ENCODE measurements at regions of chr2 and their contacts with region 1.

Region 1: GRCh38 chr2:105037572-105038382 is at the start of gene MRPS9:
- DNase-seq: peak; percentile 98
- ATAC-seq: peak; percentile 99
- H3K4me3 ChIP-seq: peak within 1 kb of the TSS; percentile 76 to 96 (median 84)
- H3K4me3 Mint-ChIP-seq: peak within 1 kb of the TSS; percentile 100
- H3K27ac ChIP-seq: peak within 1 kb of the TSS; percentile 65 to 80
- H3K27ac Mint-ChIP-seq: peak within 1 kb of the TSS; percentile 99
- H3K4me1 ChIP-seq: peaks cover 12 to 16% of the 10 kb centered on the region in 2 donors
- H3K4me1 Mint-ChIP-seq: peaks cover 35% of the 10 kb centered on the region
- H3K27me3 ChIP-seq: no peaks in the 10 kb centered on the region
- H3K27me3 Mint-ChIP-seq: no peaks in the 10 kb centered on the region
- CTCF ChIP-seq: no peak
- total RNA-seq, gene MRPS9: 18.3 and 19.8 TPM in 2 replicates

Region 2: DNA sequence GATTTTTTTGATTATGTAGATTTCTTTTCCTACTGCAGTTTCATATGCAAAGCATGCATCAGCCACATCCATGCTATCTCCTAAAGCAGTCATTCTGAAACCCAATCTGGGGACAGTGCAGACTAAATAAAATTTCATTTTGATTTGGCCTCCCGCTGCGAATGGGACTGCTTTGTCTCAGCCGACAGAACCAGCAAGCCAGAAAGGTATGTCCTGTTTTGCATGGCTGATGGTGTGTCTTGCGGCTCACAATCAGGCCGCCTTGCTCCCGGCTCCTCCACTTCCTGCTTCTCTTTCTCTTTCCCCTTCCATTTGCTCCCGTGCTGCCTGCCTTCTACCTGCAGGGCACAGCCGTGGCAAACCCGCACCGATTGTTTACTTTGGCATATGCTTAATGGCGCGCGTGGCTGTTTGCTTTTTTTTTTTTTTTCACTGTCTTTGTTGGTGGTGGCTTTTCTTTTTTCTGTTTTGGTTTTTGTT is 603.4 kb before region 1 on chr2:
- CTCF ChIA-PET with region 1: no interaction called
- POLR2A ChIA-PET with region 1: no interaction called
- intact Hi-C with region 1: no loop called
- DNase-seq: no peak
- ATAC-seq: no peak
- H3K4me3 ChIP-seq: peak overlapping the region in 2 of 5 experiments; percentile 1 to 13
- H3K4me3 Mint-ChIP-seq: peak overlapping the region; percentile 84
- H3K27ac ChIP-seq: no peak overlapping the region
- H3K27ac Mint-ChIP-seq: no peak overlapping the region
- H3K4me1 ChIP-seq: peaks cover 0 to 4% of the 10 kb centered on the region in 2 donors
- H3K4me1 Mint-ChIP-seq: peaks cover 14% of the 10 kb centered on the region
- H3K27me3 ChIP-seq: peaks cover 0 to 7% (median 4%) of the 10 kb centered on the region in 4 experiments
- H3K27me3 Mint-ChIP-seq: peaks cover 40% of the 10 kb centered on the region
- CTCF ChIP-seq: no peak

Region 3: DNA sequence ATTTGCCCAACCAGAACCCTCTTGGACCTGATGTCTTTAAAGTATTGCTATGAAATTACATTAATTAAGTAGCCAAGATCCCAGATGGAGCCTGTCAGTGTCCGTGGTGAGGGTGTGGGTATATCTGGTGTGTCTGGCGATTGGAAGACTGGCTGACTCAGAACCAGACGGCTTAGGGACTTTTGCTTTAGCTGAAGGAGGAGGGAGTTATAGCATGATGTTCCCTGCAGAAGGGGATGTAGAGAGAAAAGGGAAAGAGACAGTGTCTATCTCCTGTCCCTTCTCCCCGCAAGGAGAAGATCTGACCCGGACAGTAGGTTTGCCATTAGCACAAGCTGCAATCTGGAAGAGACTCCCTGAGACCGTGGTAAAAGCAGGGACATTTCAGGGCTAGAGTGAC is 123.3 kb before region 1 on chr2:
- CTCF ChIA-PET with region 1: no interaction called
- POLR2A ChIA-PET with region 1: no interaction called
- intact Hi-C with region 1: no loop called
- DNase-seq: no peak
- ATAC-seq: no peak
- H3K4me3 ChIP-seq: no peak overlapping the region
- H3K4me3 Mint-ChIP-seq: no peak overlapping the region
- H3K27ac ChIP-seq: no peak overlapping the region
- H3K27ac Mint-ChIP-seq: no peak overlapping the region
- H3K4me1 ChIP-seq: peaks cover 3 to 5% of the 10 kb centered on the region in 2 donors
- H3K4me1 Mint-ChIP-seq: peaks cover 12% of the 10 kb centered on the region
- H3K27me3 ChIP-seq: no peaks in the 10 kb centered on the region
- H3K27me3 Mint-ChIP-seq: peaks cover 4% of the 10 kb centered on the region
- CTCF ChIP-seq: no peak

Region 4: GRCh38 chr2:105143467-105144151 is 105.8 kb after region 1 on chr2:
- CTCF ChIA-PET with region 1: no interaction called
- POLR2A ChIA-PET with region 1: no interaction called
- intact Hi-C with region 1: loop called (anchors 5 kb)
- DNase-seq: peak; percentile 70
- ATAC-seq: peak; percentile 91
- H3K4me3 ChIP-seq: peak overlapping the region in 4 of 5 experiments; percentile 48 to 78 (median 68)
- H3K4me3 Mint-ChIP-seq: peak overlapping the region; percentile 94
- H3K27ac ChIP-seq: peak overlapping the region; percentile 15 to 27
- H3K27ac Mint-ChIP-seq: peak overlapping the region; percentile 89
- H3K4me1 ChIP-seq: peaks cover 17 to 24% of the 10 kb centered on the region in 2 donors
- H3K4me1 Mint-ChIP-seq: peaks cover 30% of the 10 kb centered on the region
- H3K27me3 ChIP-seq: peaks cover 0 to 7% (median 0%) of the 10 kb centered on the region in 4 experiments
- H3K27me3 Mint-ChIP-seq: no peaks in the 10 kb centered on the region
- CTCF ChIP-seq: no peak

Region 5: GRCh38 chr2:105235388-105236054 is 197.7 kb after region 1 on chr2:
- CTCF ChIA-PET with region 1: interaction called, 3 read pairs
- POLR2A ChIA-PET with region 1: no interaction called
- intact Hi-C with region 1: loop called (anchors 1 kb)
- DNase-seq: peak; percentile 81
- ATAC-seq: peak; percentile 68
- H3K4me3 ChIP-seq: no peak overlapping the region
- H3K4me3 Mint-ChIP-seq: no peak overlapping the region
- H3K27ac ChIP-seq: no peak overlapping the region
- H3K27ac Mint-ChIP-seq: no peak overlapping the region
- H3K4me1 ChIP-seq: peaks cover 10 to 12% of the 10 kb centered on the region in 2 donors
- H3K4me1 Mint-ChIP-seq: peaks cover 24% of the 10 kb centered on the region
- H3K27me3 ChIP-seq: no peaks in the 10 kb centered on the region
- H3K27me3 Mint-ChIP-seq: no peaks in the 10 kb centered on the region
- CTCF ChIP-seq: peak; percentile 93

Region 6: GRCh38 chr2:105337124-105338019 is 299.6 kb after region 1 on chr2 and contains the start of gene C2orf49:
- CTCF ChIA-PET with region 1: no interaction called
- POLR2A ChIA-PET with region 1: no interaction called
- intact Hi-C with region 1: loop called (anchors 2 kb)
- DNase-seq: peak; percentile 95
- ATAC-seq: peak; percentile 93
- H3K4me3 ChIP-seq: peak within 1 kb of the TSS; percentile 84 to 95 (median 86)
- H3K4me3 Mint-ChIP-seq: peak within 1 kb of the TSS; percentile 100
- H3K27ac ChIP-seq: peak within 1 kb of the TSS; percentile 92 to 98
- H3K27ac Mint-ChIP-seq: peak within 1 kb of the TSS; percentile 99
- H3K4me1 ChIP-seq: peaks cover 17 to 21% of the 10 kb centered on the region in 2 donors
- H3K4me1 Mint-ChIP-seq: peaks cover 27% of the 10 kb centered on the region
- H3K27me3 ChIP-seq: no peaks in the 10 kb centered on the region
- H3K27me3 Mint-ChIP-seq: no peaks in the 10 kb centered on the region
- CTCF ChIP-seq: no peak
- total RNA-seq, gene C2orf49: 29.3 and 32.1 TPM in 2 replicates

Region 7: DNA sequence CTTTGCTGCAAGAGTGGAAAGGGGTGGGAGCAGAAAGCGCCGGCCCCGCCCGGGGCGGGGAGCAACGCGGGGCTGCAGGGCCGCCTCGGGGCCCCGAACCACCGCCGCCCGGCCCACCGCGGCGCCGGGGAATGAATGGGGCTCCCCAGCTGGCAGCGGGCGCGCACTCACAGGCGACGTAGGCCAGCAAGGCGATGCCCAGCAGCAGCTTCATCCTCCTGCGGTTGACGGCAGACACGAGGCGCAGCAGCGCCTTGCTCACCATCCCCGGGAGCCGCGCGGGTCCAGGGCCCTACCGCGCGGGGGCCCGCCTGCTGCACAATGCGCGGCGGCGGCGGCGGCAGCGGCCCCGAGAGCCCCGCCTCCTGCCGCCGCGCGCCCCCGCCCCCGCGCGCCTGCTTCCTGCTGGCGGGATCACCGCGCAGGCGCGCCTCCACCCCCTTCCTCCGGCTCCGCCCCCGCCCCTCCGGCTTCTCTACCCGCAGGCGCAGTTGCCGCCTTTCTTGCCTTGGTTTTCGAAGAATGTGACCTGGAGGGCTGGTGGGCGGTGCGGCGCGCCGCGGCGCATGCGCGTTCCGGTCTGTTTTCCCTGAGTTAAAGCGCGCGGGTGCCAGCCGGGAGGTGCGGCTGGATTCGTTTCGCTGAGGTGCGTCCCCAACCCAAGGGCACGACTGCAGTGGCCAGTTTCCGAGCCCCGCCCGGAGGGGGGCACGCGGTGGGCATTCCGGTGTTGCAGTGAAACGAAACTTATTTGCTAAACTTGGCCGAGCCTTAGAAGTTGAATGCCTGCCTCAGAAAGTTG is 1156.4 kb after region 1 on chr2 and contains the start of gene UXS1:
- CTCF ChIA-PET with region 1: no interaction called
- POLR2A ChIA-PET with region 1: no interaction called
- intact Hi-C with region 1: loop called (anchors 10 kb)
- DNase-seq: peak; percentile 98
- ATAC-seq: peak; percentile 82
- H3K4me3 ChIP-seq: peak within 1 kb of the TSS; percentile 67 to 96 (median 91)
- H3K4me3 Mint-ChIP-seq: peak within 1 kb of the TSS; percentile 97
- H3K27ac ChIP-seq: peak within 1 kb of the TSS; percentile 66 to 82
- H3K27ac Mint-ChIP-seq: peak within 1 kb of the TSS; percentile 96
- H3K4me1 ChIP-seq: peaks cover 22 to 35% of the 10 kb centered on the region in 2 donors
- H3K4me1 Mint-ChIP-seq: peaks cover 44% of the 10 kb centered on the region
- H3K27me3 ChIP-seq: no peaks in the 10 kb centered on the region
- H3K27me3 Mint-ChIP-seq: peaks cover 9% of the 10 kb centered on the region
- CTCF ChIP-seq: no peak
- total RNA-seq, gene UXS1: 44.8 and 46.3 TPM in 2 replicates